A549 (cell line): ENCODE measurements at regions of chr3 and their contacts with region 1.

Region 1: DNA sequence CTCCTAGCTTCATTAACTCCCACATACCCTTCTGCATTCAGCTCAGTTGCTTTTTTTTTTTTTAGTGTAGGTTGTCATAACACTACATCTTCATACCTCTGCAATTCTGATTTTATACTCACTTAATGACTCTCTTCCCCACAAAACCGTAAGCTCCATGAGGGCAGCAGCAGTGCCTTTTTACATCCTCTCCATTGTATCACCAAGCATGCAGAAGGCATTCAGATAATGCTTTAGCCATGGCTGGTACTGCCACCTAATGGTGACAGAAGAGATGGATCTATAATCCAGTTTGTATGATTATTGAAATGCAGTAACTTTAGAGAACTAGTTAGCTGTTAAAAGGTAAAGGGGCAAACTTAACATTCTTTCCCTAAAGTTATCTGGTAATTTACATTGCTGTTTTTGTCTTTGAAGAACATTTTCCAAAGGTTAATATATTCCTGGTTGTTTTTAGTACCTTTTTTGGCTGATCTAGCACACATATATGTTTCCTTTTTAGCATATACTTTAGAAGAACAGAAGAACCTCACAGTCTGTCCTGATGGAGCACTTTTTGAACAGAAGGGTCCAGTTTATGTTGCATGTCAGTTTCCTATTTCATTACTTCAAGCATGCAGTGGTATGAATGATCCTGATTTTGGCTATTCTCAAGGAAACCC is 36.8 kb downstream of the ATP1B3 start:
- DNase-seq: peak; percentile 64 to 77
- ATAC-seq: peak; percentile 89 to 91
- H3K4me3 ChIP-seq: no peak overlapping the region
- H3K27ac ChIP-seq: no peak overlapping the region
- H3K4me1 ChIP-seq: no peaks in the 10 kb centered on the region
- CTCF ChIP-seq: peak; percentile 70
- EP300 ChIP-seq: no peak
- POLR2A ChIP-seq: no peak
- RAD21 ChIP-seq: peak; percentile 64 to 71

Region 2: GRCh38 chr3:141928626-141929270 is 15.5 kb after region 1 on chr3:
- CTCF ChIA-PET with region 1: interaction called, 21 read pairs
- POLR2A ChIA-PET with region 1: no interaction called
- DNase-seq: no peak
- ATAC-seq: peak in 1 of 2 experiments; percentile 13; a peak in 3 of 6 replicates
- H3K4me3 ChIP-seq: no peak overlapping the region
- H3K27ac ChIP-seq: no peak overlapping the region
- H3K4me1 ChIP-seq: no peaks in the 10 kb centered on the region
- CTCF ChIP-seq: no peak
- EP300 ChIP-seq: no peak
- POLR2A ChIP-seq: no peak
- RAD21 ChIP-seq: no peak

Region 3: GRCh38 chr3:142007710-142008399 is 94.6 kb after region 1 on chr3:
- CTCF ChIA-PET with region 1: no interaction called
- POLR2A ChIA-PET with region 1: no interaction called
- DNase-seq: no peak
- ATAC-seq: no peak; a peak in 1 of 6 replicates
- H3K4me3 ChIP-seq: no peak overlapping the region
- H3K27ac ChIP-seq: no peak overlapping the region
- H3K4me1 ChIP-seq: no peaks in the 10 kb centered on the region
- CTCF ChIP-seq: no peak
- EP300 ChIP-seq: no peak
- POLR2A ChIP-seq: no peak
- RAD21 ChIP-seq: no peak